ENCODE measurements at regions of chr16 and their contacts with region 1.

Region 1: DNA sequence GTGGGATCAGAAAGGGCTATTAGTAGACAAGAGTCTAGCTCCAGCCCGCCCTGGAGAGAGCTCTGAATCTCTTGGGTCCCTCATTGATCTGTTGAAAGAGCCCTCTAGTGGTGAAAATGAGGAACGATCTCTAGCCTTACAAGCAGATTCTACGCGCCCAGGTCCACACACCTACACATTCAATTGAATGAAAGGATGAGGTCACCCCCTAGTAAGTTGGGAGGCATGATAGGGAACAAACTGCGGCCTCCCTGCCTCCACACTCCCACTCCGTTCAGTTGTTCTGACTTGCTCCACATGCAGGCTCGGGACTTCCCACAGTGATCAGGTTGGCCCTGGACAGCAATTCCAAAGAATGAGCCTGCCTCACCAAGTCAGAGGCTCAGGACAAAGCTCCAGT is 2.9 kb upstream of the CACNG3 start:
- DNase-seq: peak in 8 of 9 experiments; percentile 3 to 69 (median 31)
- ATAC-seq: peak; percentile 56
- H3K4me3 ChIP-seq: no peak overlapping the region
- H3K4me3 Mint-ChIP-seq: no peak overlapping the region
- H3K27ac ChIP-seq: no peak overlapping the region
- H3K27ac Mint-ChIP-seq: no peak overlapping the region
- H3K4me1 ChIP-seq: no peaks in the 10 kb centered on the region
- H3K4me1 Mint-ChIP-seq: no peaks in the 10 kb centered on the region
- H3K27me3 ChIP-seq: peaks cover 15 to 20% of the 10 kb centered on the region in 2 experiments
- H3K27me3 Mint-ChIP-seq: peaks cover 43% of the 10 kb centered on the region
- CTCF ChIP-seq: peak; percentile 72

Region 2: GRCh38 chr16:23729503-23730424 is 523.4 kb before region 1 on chr16:
- CTCF ChIA-PET with region 1: interaction called, 14 read pairs
- POLR2A ChIA-PET with region 1: no interaction called
- intact Hi-C with region 1: loop called in 1 of 2 experiments (anchors 2 kb)
- DNase-seq: no peak
- ATAC-seq: no peak
- H3K4me3 ChIP-seq: no peak overlapping the region
- H3K4me3 Mint-ChIP-seq: no peak overlapping the region
- H3K27ac ChIP-seq: no peak overlapping the region
- H3K27ac Mint-ChIP-seq: no peak overlapping the region
- H3K4me1 ChIP-seq: peaks cover 5% of the 10 kb centered on the region
- H3K4me1 Mint-ChIP-seq: no peaks in the 10 kb centered on the region
- H3K27me3 ChIP-seq: no peaks in the 10 kb centered on the region
- H3K27me3 Mint-ChIP-seq: peaks cover 16% of the 10 kb centered on the region
- CTCF ChIP-seq: no peak

Region 3: DNA sequence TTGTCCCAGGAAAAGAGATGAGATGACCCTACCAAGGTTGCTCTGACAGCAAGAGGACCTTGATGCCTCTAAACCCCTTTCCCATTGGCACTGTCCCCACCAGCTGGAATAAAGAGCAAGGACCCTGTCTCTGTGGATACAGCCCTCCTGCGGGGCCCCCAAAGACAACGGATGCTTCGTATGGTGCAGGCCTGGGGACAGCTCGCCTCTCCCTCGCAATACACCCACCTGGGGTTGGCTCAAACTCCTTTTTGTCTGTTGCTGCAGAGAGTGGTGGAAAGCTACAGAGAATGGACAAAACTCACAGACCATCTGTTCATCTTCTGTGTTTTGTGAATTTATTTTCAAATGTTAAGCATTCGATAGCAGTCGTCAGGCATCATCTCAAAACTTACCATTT is 24.7 kb before region 1 on chr16:
- CTCF ChIA-PET with region 1: interaction called, 10 read pairs
- POLR2A ChIA-PET with region 1: no interaction called
- intact Hi-C with region 1: no loop called
- DNase-seq: no peak
- ATAC-seq: no peak
- H3K4me3 ChIP-seq: no peak overlapping the region
- H3K4me3 Mint-ChIP-seq: no peak overlapping the region
- H3K27ac ChIP-seq: no peak overlapping the region
- H3K27ac Mint-ChIP-seq: no peak overlapping the region
- H3K4me1 ChIP-seq: no peaks in the 10 kb centered on the region
- H3K4me1 Mint-ChIP-seq: no peaks in the 10 kb centered on the region
- H3K27me3 ChIP-seq: no peaks in the 10 kb centered on the region
- H3K27me3 Mint-ChIP-seq: peaks cover 10% of the 10 kb centered on the region
- CTCF ChIP-seq: no peak

Region 4: GRCh38 chr16:24235806-24236205 is 17.4 kb before region 1 on chr16:
- CTCF ChIA-PET with region 1: interaction called, 11 read pairs
- POLR2A ChIA-PET with region 1: no interaction called
- intact Hi-C with region 1: no loop called
- DNase-seq: no peak
- ATAC-seq: no peak
- H3K4me3 ChIP-seq: no peak overlapping the region
- H3K4me3 Mint-ChIP-seq: no peak overlapping the region
- H3K27ac ChIP-seq: no peak overlapping the region
- H3K27ac Mint-ChIP-seq: no peak overlapping the region
- H3K4me1 ChIP-seq: no peaks in the 10 kb centered on the region
- H3K4me1 Mint-ChIP-seq: no peaks in the 10 kb centered on the region
- H3K27me3 ChIP-seq: no peaks in the 10 kb centered on the region
- H3K27me3 Mint-ChIP-seq: peaks cover 20% of the 10 kb centered on the region
- CTCF ChIP-seq: no peak

Region 5: DNA sequence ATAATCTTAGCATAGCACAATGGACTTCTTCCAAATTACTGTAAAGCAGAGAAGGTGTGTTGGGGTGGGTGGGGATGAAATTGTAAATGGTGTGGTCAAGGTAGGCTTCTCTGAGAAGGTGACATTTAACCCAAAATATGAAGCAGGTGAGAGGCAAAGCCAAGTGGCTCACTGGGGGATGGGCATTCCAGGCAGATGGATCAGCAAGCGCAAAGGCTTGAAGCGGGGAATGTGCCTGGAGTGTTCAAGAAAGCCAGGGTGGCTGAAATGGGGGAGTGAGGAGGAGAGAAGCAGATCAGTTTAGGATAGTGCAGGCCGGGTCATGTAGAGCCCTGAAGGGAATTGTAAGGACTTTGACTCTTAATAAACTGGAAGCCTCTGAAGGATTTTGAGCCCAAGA is 17.5 kb after region 1 on chr16:
- CTCF ChIA-PET with region 1: interaction called, 13 read pairs
- POLR2A ChIA-PET with region 1: no interaction called
- intact Hi-C with region 1: no loop called
- DNase-seq: no peak
- ATAC-seq: no peak
- H3K4me3 ChIP-seq: no peak overlapping the region
- H3K4me3 Mint-ChIP-seq: no peak overlapping the region
- H3K27ac ChIP-seq: no peak overlapping the region
- H3K27ac Mint-ChIP-seq: no peak overlapping the region
- H3K4me1 ChIP-seq: no peaks in the 10 kb centered on the region
- H3K4me1 Mint-ChIP-seq: no peaks in the 10 kb centered on the region
- H3K27me3 ChIP-seq: no peaks in the 10 kb centered on the region
- H3K27me3 Mint-ChIP-seq: peaks cover 20% of the 10 kb centered on the region
- CTCF ChIP-seq: no peak

Region 6: GRCh38 chr16:24452724-24453123 is 199.5 kb after region 1 on chr16:
- CTCF ChIA-PET with region 1: no interaction called
- POLR2A ChIA-PET with region 1: no interaction called
- intact Hi-C with region 1: no loop called
- DNase-seq: no peak
- ATAC-seq: no peak
- H3K4me3 ChIP-seq: no peak overlapping the region
- H3K4me3 Mint-ChIP-seq: no peak overlapping the region
- H3K27ac ChIP-seq: no peak overlapping the region
- H3K27ac Mint-ChIP-seq: no peak overlapping the region
- H3K4me1 ChIP-seq: no peaks in the 10 kb centered on the region
- H3K4me1 Mint-ChIP-seq: no peaks in the 10 kb centered on the region
- H3K27me3 ChIP-seq: no peaks in the 10 kb centered on the region
- H3K27me3 Mint-ChIP-seq: peaks cover 16% of the 10 kb centered on the region
- CTCF ChIP-seq: no peak